ENCODE measurements at regions of chr1 and their contacts with region 1.

Region 1: GRCh38 chr1:230310381-230311163 is 115.6 kb downstream of the PGBD5 start:
- DNase-seq: peak; percentile 93
- H3K4me3 ChIP-seq: no peak overlapping the region
- H3K27ac ChIP-seq: no peak overlapping the region
- H3K4me1 ChIP-seq: peaks cover 0 to 22% (median 18%) of the 10 kb centered on the region in 4 donors
- H3K27me3 ChIP-seq: peaks cover 0 to 5% (median 0%) of the 10 kb centered on the region in 4 donors
- CTCF ChIP-seq: peak; percentile 92 to 95 (median 94)
- EP300 ChIP-seq: no peak
- POLR2A ChIP-seq: no peak

Region 2: GRCh38 chr1:229653420-229653819 is 657.2 kb before region 1 on chr1:
- intact Hi-C with region 1: loop called (anchors 5 kb)
- DNase-seq: no peak
- H3K4me3 ChIP-seq: no peak overlapping the region
- H3K27ac ChIP-seq: no peak overlapping the region
- H3K4me1 ChIP-seq: no peaks in the 10 kb centered on the region
- H3K27me3 ChIP-seq: no peaks in the 10 kb centered on the region
- CTCF ChIP-seq: no peak
- EP300 ChIP-seq: no peak
- POLR2A ChIP-seq: no peak

Region 3: DNA sequence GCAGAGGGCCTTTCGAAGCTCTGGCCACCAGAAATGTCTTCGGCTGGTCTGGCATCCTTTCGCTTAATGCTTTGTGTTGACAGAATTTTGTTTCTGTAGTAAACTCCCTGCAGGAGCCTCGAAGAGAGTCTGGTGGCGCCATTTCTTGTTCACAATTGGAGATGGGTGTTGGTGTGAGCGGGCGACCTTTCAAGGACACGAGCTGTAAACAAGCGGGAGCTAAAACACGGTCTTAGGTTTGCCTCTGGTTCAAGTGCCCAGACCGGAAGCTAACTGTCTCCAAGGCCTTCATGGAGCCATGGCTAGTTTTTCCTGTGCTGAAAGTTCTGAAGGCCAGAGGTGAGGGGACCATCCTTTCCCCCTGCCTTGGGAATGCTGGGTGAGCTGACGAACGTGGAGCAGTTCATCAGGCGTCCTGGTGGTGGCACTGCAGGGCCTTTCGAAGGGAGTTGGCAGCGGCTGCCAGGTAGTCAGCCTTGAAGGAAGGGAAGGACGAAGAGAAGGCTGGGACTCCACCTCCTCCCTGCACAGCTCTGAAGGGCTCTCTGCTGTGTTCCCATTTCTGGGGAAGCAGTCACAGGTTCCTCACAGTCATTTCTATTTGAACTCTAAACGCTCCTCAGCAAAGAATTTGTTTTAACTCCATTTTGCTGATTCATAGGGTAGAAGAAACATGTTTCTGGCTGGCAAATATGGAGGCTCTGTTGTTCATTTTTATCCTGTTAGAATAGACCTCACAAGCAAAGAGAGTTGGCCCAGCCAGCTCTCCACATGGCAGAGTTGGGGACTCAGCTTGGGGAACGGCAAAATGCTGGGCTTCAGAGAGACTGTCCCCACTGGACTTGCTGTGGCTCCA is 649.3 kb before region 1 on chr1:
- intact Hi-C with region 1: loop called (anchors 1 kb)
- DNase-seq: peak; percentile 94
- H3K4me3 ChIP-seq: no peak overlapping the region
- H3K27ac ChIP-seq: no peak overlapping the region
- H3K4me1 ChIP-seq: peaks cover 4 to 27% (median 18%) of the 10 kb centered on the region in 4 donors
- H3K27me3 ChIP-seq: no peaks in the 10 kb centered on the region
- CTCF ChIP-seq: peak; percentile 93 to 95 (median 95)
- EP300 ChIP-seq: no peak
- POLR2A ChIP-seq: no peak